Right cardiac atrium (tissue), 5 donors: ENCODE measurements at regions of chr6 and their contacts with region 1.

Region 1: DNA sequence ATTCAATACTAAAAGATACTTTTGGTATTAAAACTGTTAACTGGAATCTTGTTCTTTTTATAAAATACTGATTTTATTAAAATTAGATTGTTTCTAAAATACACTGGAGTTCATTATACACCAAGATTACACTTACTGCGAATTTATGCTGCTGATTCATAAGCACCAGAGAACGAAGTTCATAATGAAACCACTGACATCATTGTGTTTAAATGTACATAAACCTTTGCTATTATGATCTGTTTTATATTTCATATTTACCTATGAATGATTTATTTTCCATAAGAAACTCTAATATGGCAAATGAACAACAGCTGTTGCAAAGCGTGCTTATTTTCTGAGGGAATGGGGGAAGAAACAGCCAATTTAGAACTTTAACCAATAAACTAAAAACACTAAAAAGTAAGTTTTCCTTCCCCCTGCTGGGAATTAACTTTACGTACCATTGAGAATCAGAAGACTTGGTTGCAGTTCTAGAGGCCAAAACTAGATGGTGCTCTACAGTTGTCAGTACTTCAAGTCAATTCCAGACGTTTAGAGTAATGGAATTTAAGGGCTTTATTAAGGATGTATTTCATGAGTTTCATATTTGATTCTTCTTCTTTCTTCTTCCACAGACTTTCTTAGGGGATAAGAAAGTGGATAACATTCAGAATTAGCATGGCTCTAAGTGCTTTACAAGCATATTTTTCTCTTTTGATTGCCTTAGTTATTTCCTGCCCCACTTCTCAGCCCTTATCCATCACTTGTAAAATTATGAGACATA is 30.8 kb upstream of the COL19A1 start:
- DNase-seq: no peak
- ATAC-seq: no peak
- H3K4me3 ChIP-seq: no peak overlapping the region
- H3K27ac ChIP-seq: no peak overlapping the region
- H3K4me1 ChIP-seq: no peaks in the 10 kb centered on the region
- H3K27me3 ChIP-seq: no peaks in the 10 kb centered on the region

Region 2: DNA sequence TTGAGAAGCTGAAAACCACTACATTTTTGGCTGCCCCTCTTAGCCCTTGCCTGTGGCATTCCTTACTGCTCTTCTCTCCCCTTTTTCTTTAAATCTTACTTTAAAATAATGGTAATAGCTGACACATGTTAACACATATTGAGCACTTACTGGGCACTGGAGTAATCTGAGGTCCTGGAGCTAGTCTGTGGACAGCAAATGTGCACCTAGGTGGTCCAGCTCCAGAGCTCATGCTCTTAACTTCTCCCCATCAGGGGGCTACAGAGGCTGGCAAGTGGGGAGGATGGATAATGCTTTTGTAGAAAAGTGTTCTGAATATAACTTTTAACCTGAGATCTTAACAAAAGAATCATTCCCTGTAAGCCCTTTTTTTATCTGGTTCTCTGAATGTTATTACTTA is 1125.7 kb before region 1 on chr6:
- intact Hi-C with region 1: no loop called
- DNase-seq: no peak
- ATAC-seq: no peak
- H3K4me3 ChIP-seq: no peak overlapping the region
- H3K27ac ChIP-seq: no peak overlapping the region
- H3K4me1 ChIP-seq: no peaks in the 10 kb centered on the region
- H3K27me3 ChIP-seq: no peaks in the 10 kb centered on the region

Region 3: DNA sequence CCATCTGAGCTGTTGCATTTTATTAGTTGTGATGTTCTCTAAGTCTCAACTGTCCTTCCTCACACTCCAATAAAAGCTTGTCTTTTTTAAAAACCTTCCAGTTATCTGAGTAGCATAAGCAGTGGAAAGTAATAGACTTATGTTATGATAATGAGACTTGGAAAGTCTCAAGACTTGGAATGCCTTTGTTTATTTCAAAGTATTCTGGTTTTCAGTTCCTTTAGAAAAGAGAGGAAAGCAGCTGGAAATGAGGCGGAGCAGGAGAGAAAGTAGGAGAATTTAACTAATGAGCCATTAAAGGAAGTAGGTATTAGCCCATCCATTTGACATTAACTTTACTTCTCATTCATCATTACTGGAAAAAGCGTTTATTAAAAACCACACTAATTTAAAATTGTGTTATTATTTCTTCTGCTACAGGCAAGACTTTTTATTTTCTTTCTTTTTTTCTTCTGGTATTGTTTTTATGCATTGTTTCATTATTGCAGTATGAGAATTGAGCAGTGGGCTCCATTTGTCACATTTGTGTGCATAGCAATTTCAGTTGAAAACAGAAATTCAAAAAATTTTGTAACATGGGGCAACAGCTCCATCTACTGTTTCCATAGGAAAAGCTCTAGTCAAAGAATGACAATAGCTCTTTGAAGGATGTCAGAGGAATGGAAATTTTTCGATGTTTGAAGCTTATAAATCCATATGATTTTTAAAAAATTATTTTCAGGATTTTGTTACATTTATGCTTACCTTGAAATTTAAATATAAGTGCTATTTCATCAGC is 272.4 kb after region 1 on chr6:
- intact Hi-C with region 1: loop called (anchors 2 to 10 kb)
- DNase-seq: no peak
- ATAC-seq: no peak
- H3K4me3 ChIP-seq: no peak overlapping the region
- H3K27ac ChIP-seq: no peak overlapping the region
- H3K4me1 ChIP-seq: no peaks in the 10 kb centered on the region
- H3K27me3 ChIP-seq: no peaks in the 10 kb centered on the region

Region 4: GRCh38 chr6:70270287-70271005 is 434.8 kb after region 1 on chr6:
- intact Hi-C with region 1: no loop called
- DNase-seq: no peak
- ATAC-seq: no peak
- H3K4me3 ChIP-seq: no peak overlapping the region
- H3K27ac ChIP-seq: no peak overlapping the region
- H3K4me1 ChIP-seq: no peaks in the 10 kb centered on the region
- H3K27me3 ChIP-seq: no peaks in the 10 kb centered on the region